Panc1 (cell line): ENCODE measurements at regions of chr16 and their contacts with region 1.

Region 1: GRCh38 chr16:46555951-46556350 is 65.2 kb downstream of the SHCBP1 start:
- DNase-seq: no peak
- ATAC-seq: no peak
- H3K4me3 ChIP-seq: no peak overlapping the region
- H3K27ac ChIP-seq: no peak overlapping the region
- H3K4me1 ChIP-seq: no peaks in the 10 kb centered on the region
- H3K27me3 ChIP-seq: no peaks in the 10 kb centered on the region; the same call in 1 of the 2 replicates
- CTCF ChIP-seq: no peak

Region 2: DNA sequence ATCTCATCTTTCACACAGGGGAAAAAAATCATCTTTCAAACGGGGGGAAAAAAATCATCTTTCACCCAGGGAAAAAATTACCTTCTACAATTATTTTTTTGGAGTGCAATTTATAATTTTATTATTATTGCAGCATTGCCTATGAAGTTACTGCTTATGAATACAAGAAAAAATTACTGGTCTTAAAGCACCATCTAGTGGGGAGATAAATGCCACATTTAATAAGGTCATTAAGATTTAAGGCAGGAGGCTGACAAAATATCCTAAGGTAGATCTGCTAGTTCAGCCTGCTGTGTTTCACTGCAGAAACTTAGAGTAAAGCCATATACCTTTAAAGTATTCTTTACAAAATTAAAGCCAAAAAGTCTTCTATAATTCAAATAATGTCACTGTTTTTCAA is 51.6 kb after region 1 on chr16:
- CTCF ChIA-PET with region 1: interaction called, 3 read pairs
- POLR2A ChIA-PET with region 1: no interaction called
- in situ Hi-C with region 1: no loop called
- intact Hi-C with region 1: loop called (anchors 5 kb)
- DNase-seq: no peak
- ATAC-seq: no peak
- H3K4me3 ChIP-seq: no peak overlapping the region
- H3K27ac ChIP-seq: no peak overlapping the region
- H3K4me1 ChIP-seq: no peaks in the 10 kb centered on the region
- H3K27me3 ChIP-seq: no peaks in the 10 kb centered on the region
- CTCF ChIP-seq: peak; percentile 43; the same call in 1 of the 2 replicates